CD4-positive, alpha-beta memory T cell (primary cell): ENCODE measurements at regions of chr1 and their contacts with region 1.

Region 1: GRCh38 chr1:156421062-156421938 is 52.3 kb downstream of the RHBG start:
- DNase-seq: peak; percentile 54 to 70 (median 63)
- H3K4me3 ChIP-seq: peak overlapping the region; percentile 23 to 71
- H3K4me3 Mint-ChIP-seq: peak overlapping the region; percentile 88 to 99 (median 90)
- H3K27ac ChIP-seq: no peak overlapping the region
- H3K27ac Mint-ChIP-seq: peak overlapping the region; percentile 17 to 83 (median 52)
- H3K4me1 ChIP-seq: peaks cover 33% of the 10 kb centered on the region
- H3K4me1 Mint-ChIP-seq: peaks cover 13 to 37% (median 23%) of the 10 kb centered on the region in 4 donors
- H3K27me3 ChIP-seq: peaks cover 47% of the 10 kb centered on the region
- H3K27me3 Mint-ChIP-seq: peaks cover 31 to 43% of the 10 kb centered on the region in 2 donors

Region 2: DNA sequence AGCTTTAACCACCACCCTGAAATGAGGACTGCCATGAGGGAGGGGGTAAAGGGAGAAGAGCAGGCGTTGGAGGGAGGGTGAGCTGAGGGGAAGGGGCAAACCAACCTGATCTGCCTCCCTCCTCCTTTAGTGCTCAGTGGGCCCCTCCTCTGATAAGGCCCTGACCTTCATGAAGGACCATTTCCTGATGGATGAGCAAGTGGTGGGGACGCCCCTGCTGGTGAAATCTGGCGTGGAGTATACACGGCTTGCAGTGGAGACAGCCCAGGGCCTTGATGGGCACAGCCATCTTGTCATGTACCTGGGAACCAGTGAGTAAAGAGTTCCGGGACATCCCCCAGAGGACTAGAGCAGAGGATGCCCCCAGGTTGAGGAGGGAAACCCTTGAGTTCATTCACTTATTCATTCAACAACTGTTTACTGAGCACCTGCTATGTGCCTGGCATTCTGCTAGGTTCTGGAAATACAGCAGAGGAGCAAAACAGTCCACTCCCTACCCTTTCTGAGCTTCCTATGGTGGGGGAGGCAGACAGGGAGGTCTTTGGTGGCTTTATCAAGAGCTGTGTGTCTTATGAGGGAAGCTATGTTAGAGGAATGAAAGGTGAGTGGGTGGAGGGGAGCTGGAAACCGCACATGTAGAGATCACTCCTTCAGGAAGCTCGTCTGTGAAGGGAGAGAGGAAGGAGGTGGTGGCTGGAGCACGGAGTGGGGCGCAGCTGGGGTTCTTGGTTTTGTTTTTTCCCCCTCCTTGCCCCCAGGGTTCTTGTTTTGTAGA is 248.4 kb before region 1 on chr1:
- CTCF ChIA-PET with region 1: no interaction called
- POLR2A ChIA-PET with region 1: no interaction called
- intact Hi-C with region 1: no loop called
- DNase-seq: no peak
- H3K4me3 ChIP-seq: no peak overlapping the region
- H3K4me3 Mint-ChIP-seq: no peak overlapping the region
- H3K27ac ChIP-seq: no peak overlapping the region
- H3K27ac Mint-ChIP-seq: peak overlapping the region in 1 of 7 donors; percentile 69
- H3K4me1 ChIP-seq: peaks cover 3% of the 10 kb centered on the region
- H3K4me1 Mint-ChIP-seq: peaks cover 0 to 5% (median under 1%) of the 10 kb centered on the region in 4 donors
- H3K27me3 ChIP-seq: no peaks in the 10 kb centered on the region
- H3K27me3 Mint-ChIP-seq: peaks cover 0 to 2% of the 10 kb centered on the region in 2 donors

Region 3: DNA sequence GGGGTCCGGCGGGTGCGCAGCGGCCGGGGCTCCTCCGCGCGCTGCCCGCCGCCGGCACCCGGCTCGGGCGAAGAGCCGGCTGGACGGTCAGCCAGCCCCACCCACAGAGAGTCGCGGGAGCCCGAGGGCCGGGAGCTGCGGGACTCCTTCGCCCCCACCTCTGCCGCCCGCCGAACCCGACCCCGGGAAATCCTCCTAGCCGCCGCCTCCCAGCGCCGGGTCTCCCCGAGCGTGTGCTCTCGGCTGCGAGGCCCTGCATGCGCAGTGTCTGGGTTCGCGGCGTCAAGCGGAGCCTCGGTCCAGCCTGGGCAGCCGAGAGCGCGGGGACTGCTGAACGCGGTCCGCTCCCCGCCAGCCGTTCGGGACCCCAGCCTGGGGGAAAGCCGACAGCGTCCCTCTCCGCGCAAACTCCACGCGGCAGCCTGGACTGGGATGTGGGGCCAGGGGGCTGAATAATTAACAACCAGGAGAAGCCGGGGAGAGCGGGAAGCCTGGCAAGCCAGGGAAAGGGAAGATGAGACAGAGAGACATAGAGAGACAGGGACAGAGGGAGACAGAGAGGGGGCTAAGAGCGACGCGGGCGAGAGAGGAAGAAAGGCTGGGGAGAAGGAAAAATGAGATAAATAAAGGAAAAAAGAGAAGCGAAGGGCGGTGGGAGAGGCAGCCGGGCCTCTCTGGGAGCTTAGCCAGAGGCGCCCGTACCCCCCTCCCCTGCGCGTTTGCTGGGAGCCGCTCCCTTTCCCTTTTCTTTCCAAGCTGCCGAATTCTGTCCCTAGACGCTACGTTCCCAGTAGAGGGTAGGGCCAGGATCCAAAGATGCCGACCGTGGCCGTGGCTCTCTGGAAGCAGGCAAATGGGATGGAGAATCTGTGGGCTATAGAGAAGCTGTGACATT is 15.1 kb after region 1 on chr1:
- CTCF ChIA-PET with region 1: interaction called, 4 read pairs
- POLR2A ChIA-PET with region 1: interaction called, 4 read pairs
- intact Hi-C with region 1: loop called (anchors 2 kb)
- DNase-seq: no peak
- H3K4me3 ChIP-seq: no peak overlapping the region
- H3K4me3 Mint-ChIP-seq: peak overlapping the region; percentile 41 to 88 (median 69)
- H3K27ac ChIP-seq: no peak overlapping the region
- H3K27ac Mint-ChIP-seq: no peak overlapping the region
- H3K4me1 ChIP-seq: peaks cover 36% of the 10 kb centered on the region
- H3K4me1 Mint-ChIP-seq: peaks cover 18 to 35% (median 23%) of the 10 kb centered on the region in 4 donors
- H3K27me3 ChIP-seq: peaks cover 86% of the 10 kb centered on the region
- H3K27me3 Mint-ChIP-seq: peaks cover 80% of the 10 kb centered on the region in 2 donors